ENCODE measurements at regions of chr10 and their contacts with region 1.

Region 1: DNA sequence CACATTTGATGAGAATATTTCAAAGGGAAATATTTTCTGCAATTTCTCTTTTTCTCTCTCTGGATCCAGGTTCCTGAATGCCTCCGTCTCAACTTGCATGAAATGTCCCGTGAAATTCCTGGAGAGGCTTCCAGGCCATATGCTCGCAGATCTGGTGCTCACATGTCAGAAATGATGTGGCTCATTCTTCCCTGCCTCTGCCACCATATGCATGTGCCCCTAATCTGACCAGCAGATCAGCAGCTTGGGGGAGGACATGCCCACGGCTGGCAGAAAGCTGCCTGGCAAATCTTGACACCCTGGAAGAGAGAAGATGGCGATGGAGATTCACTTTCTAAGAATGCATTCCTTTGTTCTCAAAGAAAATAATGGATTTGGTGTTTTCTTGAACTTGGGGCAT is 490.7 kb downstream of the RPS24 start:
- DNase-seq: no peak
- H3K4me3 ChIP-seq: no peak overlapping the region
- H3K27ac ChIP-seq: no peak overlapping the region
- H3K4me1 ChIP-seq: peaks cover 14% of the 10 kb centered on the region; the same call in 1 of the 2 replicates
- H3K27me3 ChIP-seq: no peaks in the 10 kb centered on the region
- CTCF ChIP-seq: no peak

Region 2: DNA sequence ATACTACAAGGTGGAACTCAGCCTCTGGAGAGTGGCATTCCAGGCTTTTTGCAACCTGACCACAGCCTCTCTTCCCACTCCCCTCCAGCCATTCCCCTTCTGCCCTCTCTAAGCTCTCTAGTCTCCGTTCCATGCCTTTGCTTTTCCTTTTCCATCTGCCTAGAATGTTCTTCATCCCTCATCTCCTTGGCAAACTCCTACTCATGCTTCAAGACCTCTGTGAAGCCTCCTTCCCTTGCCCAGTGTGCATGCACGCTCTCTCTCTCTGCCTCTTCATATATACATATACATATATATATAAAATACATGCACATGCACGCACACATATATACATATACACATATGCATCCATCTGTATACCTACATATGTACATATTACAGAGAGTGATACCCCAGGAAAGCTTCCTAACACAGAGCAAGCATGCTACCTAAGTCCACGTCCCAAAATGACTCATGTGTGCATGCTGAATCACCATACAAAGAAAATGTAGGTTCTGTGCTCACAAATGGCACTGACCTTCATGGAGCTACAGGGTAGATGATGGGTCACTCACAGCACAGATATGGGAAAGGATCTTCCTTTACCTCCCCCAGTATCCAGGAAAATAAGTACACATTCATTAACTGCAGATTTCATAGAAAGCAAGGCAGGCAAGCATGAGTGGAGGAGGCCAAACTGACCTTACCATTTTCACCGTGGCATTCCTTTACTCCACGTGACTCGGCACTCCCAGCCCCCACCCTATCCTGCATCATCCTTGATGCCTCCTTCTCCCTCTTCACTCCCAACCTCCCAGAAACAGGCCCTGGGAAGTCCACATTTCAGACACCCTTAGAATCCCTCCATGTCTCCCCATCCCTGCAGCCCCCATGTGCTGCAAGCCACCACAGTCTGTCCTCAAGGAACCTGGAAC is 306.0 kb after region 1 on chr10:
- CTCF ChIA-PET with region 1: no interaction called
- POLR2A ChIA-PET with region 1: interaction called, 10 read pairs
- intact Hi-C with region 1: no loop called
- DNase-seq: no peak
- H3K4me3 ChIP-seq: no peak overlapping the region
- H3K27ac ChIP-seq: no peak overlapping the region
- H3K4me1 ChIP-seq: peaks cover 6% of the 10 kb centered on the region; the same call in 1 of the 2 replicates
- H3K27me3 ChIP-seq: no peaks in the 10 kb centered on the region
- CTCF ChIP-seq: no peak

Measured in PC-9 (cell line).